CD8-positive, alpha-beta T cell (primary cell): ENCODE measurements at regions of chr17 and their contacts with region 1.

Region 1: GRCh38 chr17:76714822-76715495 is 4.2 kb upstream of the MXRA7 start:
- DNase-seq: peak; percentile 57 to 88 (median 76)
- ATAC-seq: peak; percentile 5
- H3K4me3 ChIP-seq: peak overlapping the region in 1 of 2 experiments; percentile 4
- H3K4me3 Mint-ChIP-seq: peak overlapping the region; percentile 55
- H3K27ac ChIP-seq: peak overlapping the region; percentile 71 to 83
- H3K27ac Mint-ChIP-seq: peak overlapping the region; percentile 97
- H3K4me1 ChIP-seq: peaks cover 54% of the 10 kb centered on the region
- H3K4me1 Mint-ChIP-seq: peaks cover 57% of the 10 kb centered on the region
- H3K27me3 ChIP-seq: no peaks in the 10 kb centered on the region
- H3K27me3 Mint-ChIP-seq: no peaks in the 10 kb centered on the region
- CTCF ChIP-seq: peak; percentile 95

Region 2: GRCh38 chr17:76492989-76493501 is 221.9 kb before region 1 on chr17:
- CTCF ChIA-PET with region 1: no interaction called
- POLR2A ChIA-PET with region 1: no interaction called
- intact Hi-C with region 1: no loop called
- DNase-seq: peak in 6 of 9 experiments; percentile 19 to 78 (median 49)
- ATAC-seq: peak; percentile 38
- H3K4me3 ChIP-seq: peak overlapping the region; percentile 41 to 42
- H3K4me3 Mint-ChIP-seq: peak overlapping the region; percentile 80
- H3K27ac ChIP-seq: peak overlapping the region; percentile 60 to 91
- H3K27ac Mint-ChIP-seq: peak overlapping the region; percentile 93
- H3K4me1 ChIP-seq: peaks cover 40% of the 10 kb centered on the region
- H3K4me1 Mint-ChIP-seq: peaks cover 42% of the 10 kb centered on the region
- H3K27me3 ChIP-seq: no peaks in the 10 kb centered on the region
- H3K27me3 Mint-ChIP-seq: no peaks in the 10 kb centered on the region
- CTCF ChIP-seq: no peak

Region 3: DNA sequence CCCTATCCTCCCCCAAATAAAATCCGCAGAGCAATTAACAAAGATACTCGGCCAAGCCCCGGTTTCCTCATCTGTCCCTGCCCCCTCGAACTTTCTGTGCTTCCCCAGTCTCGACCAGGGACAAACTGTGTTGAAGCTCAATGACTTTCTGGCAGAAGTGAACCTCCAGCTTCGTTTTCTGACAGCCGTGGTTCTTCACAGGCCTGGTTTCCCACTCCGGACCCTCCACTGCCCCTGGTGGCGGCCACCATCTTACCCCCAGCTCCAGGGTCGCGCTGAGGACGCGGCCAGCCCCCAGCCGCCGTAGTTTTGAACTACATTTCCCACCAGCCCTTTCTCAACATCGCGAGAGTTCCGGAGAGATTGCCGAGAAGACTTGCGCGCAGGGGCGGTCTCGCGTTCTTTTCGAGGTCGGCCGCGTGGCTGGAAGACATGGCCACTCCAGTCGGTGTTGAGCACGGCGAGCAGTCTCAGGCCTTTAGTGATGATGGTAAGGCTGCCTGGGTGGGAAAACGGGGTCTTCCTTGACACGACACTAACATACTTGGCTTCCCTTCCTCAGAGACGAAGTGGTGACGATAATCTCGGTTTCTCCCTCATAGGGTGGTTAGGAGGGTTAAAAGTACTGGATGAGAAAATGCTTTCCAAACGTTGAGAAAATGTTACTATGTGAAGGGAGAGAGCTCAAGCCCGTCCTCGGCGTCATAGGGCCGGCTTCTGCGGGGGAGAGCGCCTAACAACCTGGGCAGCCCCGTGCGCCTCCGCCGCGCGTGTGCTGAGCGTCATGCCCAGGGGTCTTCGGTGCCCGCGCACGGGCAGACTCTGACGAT is 157.4 kb before region 1 on chr17:
- CTCF ChIA-PET with region 1: interaction called, 17 read pairs
- POLR2A ChIA-PET with region 1: interaction called, 3 read pairs
- intact Hi-C with region 1: no loop called
- DNase-seq: peak; percentile 86 to 97 (median 92)
- ATAC-seq: peak; percentile 78
- H3K4me3 ChIP-seq: peak overlapping the region; percentile 70 to 75
- H3K4me3 Mint-ChIP-seq: peak overlapping the region; percentile 95
- H3K27ac ChIP-seq: peak overlapping the region; percentile 81 to 95
- H3K27ac Mint-ChIP-seq: peak overlapping the region; percentile 97
- H3K4me1 ChIP-seq: peaks cover 49% of the 10 kb centered on the region
- H3K4me1 Mint-ChIP-seq: peaks cover 63% of the 10 kb centered on the region
- H3K27me3 ChIP-seq: no peaks in the 10 kb centered on the region
- H3K27me3 Mint-ChIP-seq: no peaks in the 10 kb centered on the region
- CTCF ChIP-seq: peak; percentile 35

Region 4: GRCh38 chr17:76681222-76682137 is 33.5 kb before region 1 on chr17:
- CTCF ChIA-PET with region 1: interaction called, 25 read pairs
- POLR2A ChIA-PET with region 1: no interaction called
- intact Hi-C with region 1: no loop called
- DNase-seq: peak; percentile 55 to 86 (median 79)
- ATAC-seq: peak; percentile 78
- H3K4me3 ChIP-seq: no peak overlapping the region
- H3K4me3 Mint-ChIP-seq: no peak overlapping the region
- H3K27ac ChIP-seq: peak overlapping the region in 1 of 2 experiments; percentile 39
- H3K27ac Mint-ChIP-seq: no peak overlapping the region
- H3K4me1 ChIP-seq: peaks cover 29% of the 10 kb centered on the region
- H3K4me1 Mint-ChIP-seq: peaks cover 11% of the 10 kb centered on the region
- H3K27me3 ChIP-seq: no peaks in the 10 kb centered on the region
- H3K27me3 Mint-ChIP-seq: no peaks in the 10 kb centered on the region
- CTCF ChIP-seq: peak; percentile 77

Region 5: DNA sequence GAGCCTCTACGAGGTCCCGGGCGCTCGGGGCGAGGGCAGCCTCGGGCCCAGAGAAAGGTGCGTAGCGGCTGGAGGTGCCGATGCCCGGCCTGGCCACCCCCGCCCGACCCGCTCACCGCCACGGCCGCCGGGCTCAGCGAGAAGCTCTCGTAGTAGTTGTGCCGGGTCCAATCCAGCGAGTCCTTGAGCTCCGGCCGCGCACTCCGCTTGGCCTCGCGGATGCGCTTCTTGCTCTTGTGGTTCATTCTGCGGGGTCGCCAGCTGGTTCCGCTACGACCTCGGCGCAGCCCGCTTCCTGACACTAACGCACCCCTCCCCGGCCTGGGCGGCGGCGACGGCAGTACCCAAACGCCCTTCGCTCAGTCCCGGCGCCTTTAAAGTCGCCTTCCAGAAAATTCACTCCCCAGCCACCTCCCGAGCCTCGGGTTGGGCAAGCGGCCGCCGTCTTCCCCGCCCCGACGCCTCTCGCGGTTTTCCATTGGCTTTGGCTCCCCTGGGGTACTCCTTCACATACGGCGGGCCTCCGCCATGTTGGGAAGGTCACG is 11.3 kb after region 1 on chr17 and contains the start of gene JMJD6:
- CTCF ChIA-PET with region 1: interaction called, 74 read pairs
- POLR2A ChIA-PET with region 1: interaction called, 72 read pairs
- intact Hi-C with region 1: loop called (anchors 1 kb)
- DNase-seq: peak in 5 of 9 experiments; percentile 88 to 95 (median 93)
- ATAC-seq: peak; percentile 77
- H3K4me3 ChIP-seq: peak within 1 kb of the TSS; percentile 87 to 92
- H3K4me3 Mint-ChIP-seq: peak within 1 kb of the TSS; percentile 99
- H3K27ac ChIP-seq: peak within 1 kb of the TSS; percentile 98 to 99
- H3K27ac Mint-ChIP-seq: peak within 1 kb of the TSS; percentile 99
- H3K4me1 ChIP-seq: peaks cover 46% of the 10 kb centered on the region
- H3K4me1 Mint-ChIP-seq: peaks cover 57% of the 10 kb centered on the region
- H3K27me3 ChIP-seq: no peaks in the 10 kb centered on the region
- H3K27me3 Mint-ChIP-seq: no peaks in the 10 kb centered on the region
- CTCF ChIP-seq: no peak
- total RNA-seq, gene JMJD6: 316 to 336 TPM

Region 6: DNA sequence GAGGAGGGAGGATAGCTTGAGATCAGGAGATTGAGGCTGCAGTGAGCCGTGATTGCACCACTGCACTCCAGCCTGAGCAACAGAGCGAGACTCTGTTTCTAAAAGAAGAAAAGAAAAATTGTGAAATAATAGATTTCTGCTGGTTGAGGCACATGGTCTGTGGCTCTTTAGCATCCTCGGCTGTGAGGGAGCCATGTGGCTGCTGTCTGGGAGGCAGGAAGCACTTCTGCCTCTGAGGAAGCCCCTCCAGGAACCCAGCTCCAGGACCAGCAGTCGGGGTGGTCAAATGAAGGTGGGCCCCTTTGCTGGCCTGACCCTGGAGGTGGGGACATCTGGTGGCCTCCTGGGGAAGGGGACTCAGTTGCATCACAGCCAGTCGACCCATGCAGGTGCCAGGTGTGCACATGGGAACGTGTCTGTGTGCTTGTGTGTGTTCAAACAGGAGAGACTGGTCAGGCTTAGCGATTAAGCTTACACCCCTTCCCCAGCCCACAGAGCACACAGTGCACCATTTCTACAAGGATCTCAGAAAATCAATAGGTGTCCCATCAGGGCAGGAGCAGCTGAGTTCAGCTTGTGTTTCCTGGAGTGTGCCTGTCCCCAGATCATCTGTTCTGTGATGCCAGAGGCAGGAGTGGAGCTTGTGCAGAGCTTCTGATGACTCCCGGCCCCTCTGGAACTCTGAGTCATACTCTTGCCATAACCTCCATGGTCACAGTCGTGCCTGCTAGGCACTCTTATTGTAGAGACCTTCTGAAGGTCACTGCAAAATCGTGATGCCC is 128.9 kb after region 1 on chr17:
- CTCF ChIA-PET with region 1: interaction called, 4 read pairs
- POLR2A ChIA-PET with region 1: no interaction called
- intact Hi-C with region 1: loop called in 1 of 2 experiments (anchors 5 kb)
- DNase-seq: no peak
- ATAC-seq: no peak
- H3K4me3 ChIP-seq: no peak overlapping the region
- H3K4me3 Mint-ChIP-seq: no peak overlapping the region
- H3K27ac ChIP-seq: no peak overlapping the region
- H3K27ac Mint-ChIP-seq: no peak overlapping the region
- H3K4me1 ChIP-seq: peaks cover 8% of the 10 kb centered on the region
- H3K4me1 Mint-ChIP-seq: peaks cover 8% of the 10 kb centered on the region
- H3K27me3 ChIP-seq: peaks cover 23 to 26% of the 10 kb centered on the region in 2 experiments
- H3K27me3 Mint-ChIP-seq: peaks cover 56% of the 10 kb centered on the region
- CTCF ChIP-seq: no peak